Left cardiac atrium (tissue), 4 donors: ENCODE measurements at regions of chr6 and their contacts with region 1.

Region 1: GRCh38 chr6:3251462-3252314 is 7.1 kb upstream of the PSMG4 start:
- DNase-seq: peak; percentile 76
- ATAC-seq: peak; percentile 78 to 85

Region 2: DNA sequence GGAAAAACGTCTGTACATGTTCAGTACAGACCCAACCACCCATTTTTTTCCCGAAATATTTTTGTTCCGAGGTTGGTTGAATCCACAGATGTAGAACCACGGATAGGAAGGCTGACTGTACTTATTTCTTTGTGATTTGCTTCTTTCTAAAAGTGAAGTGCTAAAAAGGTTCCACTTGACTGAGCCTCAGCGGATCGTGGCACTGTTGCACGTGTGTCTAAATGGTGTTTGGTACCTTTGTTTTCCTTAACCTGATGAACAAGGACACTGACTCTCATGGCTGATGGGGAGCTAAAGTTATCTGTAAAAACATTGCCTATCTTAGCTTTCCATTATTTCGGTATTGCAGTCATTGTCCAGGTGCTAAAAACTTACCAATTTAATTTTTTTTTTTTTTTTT is 127.0 kb before region 1 on chr6:
- intact Hi-C with region 1: loop called (anchors 2 to 5 kb)
- DNase-seq: no peak
- ATAC-seq: no peak

Region 3: GRCh38 chr6:3356056-3356761 is 104.5 kb after region 1 on chr6:
- intact Hi-C with region 1: no loop called
- DNase-seq: peak; percentile 75
- ATAC-seq: peak; percentile 77 to 85

Region 4: GRCh38 chr6:3438190-3439167 is 186.8 kb after region 1 on chr6:
- intact Hi-C with region 1: no loop called
- DNase-seq: no peak
- ATAC-seq: no peak